AG04449 (cell line): ENCODE measurements at regions of chr3 and their contacts with region 1.

Region 1: GRCh38 chr3:16600780-16601539 is 4.3 kb downstream of the DAZL start:
- DNase-seq: peak; percentile 53
- H3K4me3 ChIP-seq: no peak overlapping the region
- CTCF ChIP-seq: peak; percentile 63

Region 2: GRCh38 chr3:16768959-16769358 is 168.0 kb after region 1 on chr3:
- CTCF ChIA-PET with region 1: no interaction called
- POLR2A ChIA-PET with region 1: no interaction called
- DNase-seq: no peak
- H3K4me3 ChIP-seq: no peak overlapping the region
- CTCF ChIP-seq: no peak

Region 3: DNA sequence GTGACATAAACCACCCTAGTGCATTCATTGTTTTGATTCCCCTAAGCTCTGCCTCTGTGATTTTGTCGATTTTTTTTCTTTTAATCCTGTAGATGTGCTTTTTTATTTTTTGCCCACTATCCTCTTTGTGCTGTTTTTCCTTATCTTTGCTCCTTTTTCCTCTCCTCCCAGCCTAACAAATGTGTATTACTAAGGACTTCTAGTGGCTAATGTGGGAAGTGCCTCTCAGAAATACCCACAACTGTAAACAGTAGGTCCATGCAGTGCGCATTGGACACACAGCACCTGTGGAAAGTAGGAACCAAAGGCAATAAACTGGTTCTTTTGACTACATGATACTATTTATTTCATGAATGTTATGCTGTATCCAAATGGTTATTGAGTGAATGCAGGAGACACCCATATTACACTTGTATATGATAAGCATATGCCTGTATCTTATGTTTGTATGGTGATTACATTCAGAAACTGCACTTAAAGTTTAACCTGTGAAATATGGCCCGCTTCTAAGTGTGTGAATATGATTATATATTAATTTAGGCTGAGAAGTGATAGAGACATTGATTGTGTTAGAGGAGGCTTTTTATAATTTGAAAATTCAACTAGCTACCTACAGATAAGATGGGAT is 431.6 kb after region 1 on chr3:
- CTCF ChIA-PET with region 1: interaction called, 43 read pairs
- POLR2A ChIA-PET with region 1: no interaction called
- DNase-seq: no peak
- H3K4me3 ChIP-seq: no peak overlapping the region
- CTCF ChIP-seq: peak; percentile 53

Region 4: GRCh38 chr3:17233398-17233800 is 632.4 kb after region 1 on chr3:
- CTCF ChIA-PET with region 1: interaction called, 120 read pairs
- POLR2A ChIA-PET with region 1: no interaction called
- DNase-seq: no peak
- H3K4me3 ChIP-seq: no peak overlapping the region
- CTCF ChIP-seq: peak; percentile 60